AG04449 (cell line): ENCODE measurements at regions of chr17 and their contacts with region 1.

Region 1: DNA sequence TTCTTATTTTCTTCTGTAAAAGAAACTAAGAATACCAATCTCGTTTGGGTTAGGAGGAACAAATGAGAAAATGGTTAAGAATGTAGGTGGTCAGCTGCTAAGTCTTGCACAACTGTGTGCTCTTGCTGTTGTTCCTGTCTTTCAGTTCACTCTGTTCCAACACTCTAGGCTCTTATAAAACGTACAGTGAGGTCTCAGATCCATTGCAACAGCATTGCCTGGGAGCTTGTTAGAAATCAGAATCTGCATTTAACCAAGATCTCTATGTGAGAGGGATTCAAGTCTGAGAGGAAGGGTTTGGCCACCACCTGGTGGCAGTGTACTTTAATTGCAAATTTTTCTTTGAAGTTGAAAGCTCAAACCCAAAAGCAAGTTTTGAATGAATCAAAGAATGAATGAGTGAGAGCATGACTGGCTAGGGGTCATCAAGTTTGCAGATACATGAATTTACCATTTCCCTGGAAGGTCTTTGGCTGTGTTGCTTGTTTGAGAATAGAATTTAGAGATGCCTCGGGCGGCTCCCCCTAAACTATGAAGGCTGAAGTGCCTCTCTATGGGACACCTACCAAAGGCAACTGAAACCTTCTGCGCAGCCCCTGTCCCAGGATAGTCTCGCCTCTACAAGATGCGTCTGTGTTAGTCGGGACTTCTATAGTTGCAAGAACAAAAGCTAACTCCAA is 2.5 kb downstream of the ALOX15B start:
- DNase-seq: no peak
- H3K4me3 ChIP-seq: no peak overlapping the region
- CTCF ChIP-seq: peak; percentile 33

Region 2: DNA sequence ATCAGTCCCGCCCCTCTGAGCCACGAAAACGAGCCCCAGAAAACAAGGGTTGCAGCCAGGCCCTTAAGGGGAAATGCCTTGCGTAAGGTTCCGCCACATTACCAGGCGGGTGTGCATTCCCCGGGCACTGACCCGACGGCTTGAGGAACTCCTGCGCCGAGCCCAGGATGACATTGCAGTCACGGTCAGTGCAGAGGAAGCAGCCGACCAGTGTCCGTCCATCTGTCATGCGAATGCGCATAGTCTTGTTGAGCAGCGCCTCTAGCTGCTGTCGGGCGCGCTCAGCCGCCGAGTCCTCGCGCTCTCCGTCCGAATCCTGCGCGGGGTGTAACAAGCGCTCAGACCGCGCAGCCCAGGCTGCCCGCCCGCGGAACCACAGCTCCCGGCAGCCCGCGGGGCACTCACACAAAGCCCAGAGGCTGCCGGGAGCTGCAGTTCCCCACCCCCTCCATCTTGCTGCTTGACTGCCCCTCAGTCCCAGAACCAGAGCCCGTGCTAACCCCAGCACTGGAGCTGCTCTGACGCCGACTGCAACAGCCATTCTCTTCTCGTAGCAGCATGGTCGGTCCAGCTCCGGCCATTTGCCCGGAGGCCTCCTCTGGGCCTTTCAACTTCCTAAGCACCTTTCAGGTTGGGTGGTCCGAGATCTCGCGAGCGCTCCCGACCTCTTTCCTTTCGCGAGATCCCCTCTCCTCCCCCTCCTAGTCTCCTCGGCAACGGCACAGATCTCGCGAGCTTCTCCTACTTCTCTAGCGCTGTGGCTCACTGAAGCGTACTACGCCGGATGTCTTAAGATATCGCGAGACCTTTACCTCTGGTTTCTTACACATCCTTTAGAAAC is 184.3 kb before region 1 on chr17 and contains the start of gene NAA38:
- CTCF ChIA-PET with region 1: interaction called, 41 read pairs
- POLR2A ChIA-PET with region 1: no interaction called
- DNase-seq: peak; percentile 97
- H3K4me3 ChIP-seq: peak within 1 kb of the TSS; percentile 80
- CTCF ChIP-seq: peak; percentile 71

Region 3: GRCh38 chr17:7915611-7916382 is 125.6 kb before region 1 on chr17 and contains the start of gene RNF227:
- CTCF ChIA-PET with region 1: interaction called, 40 read pairs
- POLR2A ChIA-PET with region 1: interaction called, 5 read pairs
- DNase-seq: peak; percentile 81
- H3K4me3 ChIP-seq: peak within 1 kb of the TSS; percentile 70
- CTCF ChIP-seq: no peak

Region 4: GRCh38 chr17:8016632-8017478 is 24.5 kb before region 1 on chr17:
- CTCF ChIA-PET with region 1: interaction called, 27 read pairs
- POLR2A ChIA-PET with region 1: no interaction called
- DNase-seq: no peak
- H3K4me3 ChIP-seq: no peak overlapping the region
- CTCF ChIP-seq: peak; percentile 44

Region 5: DNA sequence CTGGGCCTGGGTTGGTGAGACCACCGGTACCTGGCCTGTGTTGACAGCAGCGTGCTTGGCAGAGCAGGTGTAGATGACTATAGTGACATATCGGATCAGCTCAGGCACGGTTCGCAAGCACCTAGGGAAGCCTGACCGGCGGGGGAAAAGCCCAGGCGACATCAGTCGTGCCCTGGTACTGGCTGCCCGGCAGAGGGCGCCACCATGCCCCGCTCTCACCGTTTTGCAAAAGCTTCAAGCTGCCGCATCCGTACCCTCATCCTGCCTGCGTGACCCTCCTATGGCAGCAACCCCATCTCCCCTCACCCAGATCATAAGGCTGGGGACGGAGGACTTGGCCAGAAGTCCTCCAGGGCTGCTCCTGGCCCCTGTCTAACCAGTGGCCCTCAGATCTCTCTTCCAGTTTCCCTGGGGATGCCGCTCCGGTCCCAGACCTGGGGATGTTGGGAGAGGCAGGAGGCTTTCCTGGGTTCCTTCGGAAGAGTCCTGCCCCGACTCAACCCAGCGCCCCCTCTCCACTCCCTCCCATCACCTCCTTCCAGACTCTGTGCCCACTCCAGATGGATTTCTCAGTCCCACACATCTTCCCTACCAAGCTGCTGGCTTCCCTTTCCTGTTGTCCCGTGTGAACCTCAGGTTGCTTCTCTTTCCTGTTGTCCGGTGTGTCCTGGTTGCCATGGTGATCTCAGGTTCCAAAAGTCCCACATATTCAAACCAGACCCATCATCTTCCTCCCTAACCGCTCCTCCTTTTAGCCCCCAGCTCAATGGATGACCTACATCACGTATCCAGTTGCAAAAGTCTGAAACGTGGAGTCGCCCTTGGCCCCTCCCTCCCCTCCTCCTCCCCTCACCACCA is 32.5 kb after region 1 on chr17:
- CTCF ChIA-PET with region 1: interaction called, 17 read pairs
- POLR2A ChIA-PET with region 1: no interaction called
- DNase-seq: no peak
- H3K4me3 ChIP-seq: no peak overlapping the region
- CTCF ChIP-seq: peak; percentile 87